Calu3 (cell line): ENCODE measurements at regions of chr10 and their contacts with region 1.

Region 1: DNA sequence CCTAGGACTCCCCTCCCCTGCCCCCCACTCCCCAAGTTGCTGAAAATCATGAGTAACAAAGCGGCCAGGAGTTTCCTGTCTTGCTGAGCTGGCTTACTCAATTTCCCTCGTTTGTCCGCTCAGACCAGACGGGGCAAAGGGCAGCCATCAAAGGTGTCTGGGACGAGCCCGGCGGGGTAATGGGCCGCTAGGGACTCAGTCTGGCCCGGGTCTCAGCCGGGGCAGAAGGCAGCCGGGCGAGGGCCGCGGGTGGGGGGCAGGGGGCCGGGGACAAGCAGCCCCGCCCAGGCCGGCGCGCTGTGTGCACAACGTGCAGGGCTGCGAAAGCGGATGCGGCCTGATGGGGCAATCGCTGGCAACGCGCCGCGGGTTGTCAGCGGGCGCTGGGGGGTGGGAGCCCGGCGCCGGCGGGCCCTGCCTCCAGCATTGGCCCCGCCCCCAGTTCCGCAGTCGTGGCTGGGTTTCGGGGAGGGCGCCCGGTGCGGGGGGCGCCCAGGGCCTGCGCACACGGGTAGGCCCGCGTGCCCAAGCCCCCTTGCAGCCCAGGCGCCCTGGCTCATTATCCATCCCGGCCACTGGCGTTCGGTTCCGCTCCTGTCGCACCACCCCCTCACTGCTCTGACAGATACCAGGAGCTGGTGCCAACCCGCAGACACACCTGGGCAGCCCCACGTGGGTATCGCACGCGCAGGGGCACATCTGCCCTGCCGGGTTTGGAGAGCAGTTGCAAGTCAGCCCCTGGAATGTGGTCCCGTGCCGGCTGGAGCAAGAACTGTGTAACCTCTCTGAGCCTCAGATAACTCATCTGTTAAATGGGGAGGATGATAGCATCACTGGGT is 35.1 kb downstream of the DNAJB12 start:
- DNase-seq: peak; percentile 97
- H3K4me3 Mint-ChIP-seq: peak overlapping the region; percentile 46
- H3K27ac Mint-ChIP-seq: peak overlapping the region; percentile 98
- H3K4me1 Mint-ChIP-seq: peaks cover 89% of the 10 kb centered on the region
- H3K27me3 Mint-ChIP-seq: no peaks in the 10 kb centered on the region
- CTCF ChIP-seq: no peak

Region 2: GRCh38 chr10:72260588-72261322 is 58.9 kb before region 1 on chr10:
- CTCF ChIA-PET with region 1: interaction called, 23 read pairs
- intact Hi-C with region 1: no loop called
- DNase-seq: peak; percentile 100
- H3K4me3 Mint-ChIP-seq: peak overlapping the region; percentile 67
- H3K27ac Mint-ChIP-seq: peak overlapping the region; percentile 98
- H3K4me1 Mint-ChIP-seq: peaks cover 59% of the 10 kb centered on the region
- H3K27me3 Mint-ChIP-seq: no peaks in the 10 kb centered on the region
- CTCF ChIP-seq: no peak

Region 3: DNA sequence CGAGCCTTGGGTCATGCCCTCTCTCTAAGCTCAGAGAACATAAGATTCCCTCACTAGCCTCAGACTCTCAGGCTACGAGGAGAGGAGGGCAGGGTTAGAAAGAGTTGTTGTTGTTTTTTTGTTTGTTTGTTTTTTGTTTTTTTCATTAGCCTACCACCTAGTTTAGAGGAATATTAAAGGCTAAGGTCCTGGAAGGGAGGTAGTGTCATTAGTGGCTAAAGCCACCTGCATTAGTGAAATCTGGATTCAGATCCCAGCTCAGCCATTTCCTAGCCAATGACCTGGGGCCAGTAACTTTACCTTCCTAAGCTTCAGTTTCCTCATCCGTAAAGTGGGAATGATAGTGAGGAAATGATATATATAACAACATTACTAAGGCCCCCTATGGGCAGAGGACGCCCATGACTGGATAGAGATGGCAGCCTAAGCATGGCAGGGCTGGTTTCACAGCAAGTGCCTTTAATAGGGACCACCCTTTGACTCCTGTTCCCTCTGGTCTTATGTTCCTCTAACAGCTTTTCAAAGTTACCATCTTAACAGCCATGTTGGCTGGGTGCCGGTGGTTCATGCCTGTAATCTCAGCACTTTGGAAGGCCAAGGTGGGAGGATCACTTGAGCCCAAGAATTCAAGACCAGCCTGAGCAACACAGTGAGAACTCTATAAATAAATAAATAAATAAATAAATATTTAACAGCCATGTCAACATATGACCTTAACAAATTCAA is 40.8 kb before region 1 on chr10:
- CTCF ChIA-PET with region 1: interaction called, 29 read pairs
- intact Hi-C with region 1: no loop called
- DNase-seq: no peak
- H3K4me3 Mint-ChIP-seq: no peak overlapping the region
- H3K27ac Mint-ChIP-seq: peak overlapping the region; percentile 99
- H3K4me1 Mint-ChIP-seq: peaks cover 38% of the 10 kb centered on the region
- H3K27me3 Mint-ChIP-seq: no peaks in the 10 kb centered on the region
- CTCF ChIP-seq: no peak

Region 4: GRCh38 chr10:72292223-72292691 is 27.4 kb before region 1 on chr10:
- CTCF ChIA-PET with region 1: interaction called, 13 read pairs
- intact Hi-C with region 1: loop called (anchors 2 kb)
- DNase-seq: peak; percentile 90
- H3K4me3 Mint-ChIP-seq: peak overlapping the region; percentile 1
- H3K27ac Mint-ChIP-seq: peak overlapping the region; percentile 74
- H3K4me1 Mint-ChIP-seq: peaks cover 42% of the 10 kb centered on the region
- H3K27me3 Mint-ChIP-seq: no peaks in the 10 kb centered on the region
- CTCF ChIP-seq: no peak

Region 5: GRCh38 chr10:72297968-72298773 is 21.5 kb before region 1 on chr10:
- CTCF ChIA-PET with region 1: interaction called, 13 read pairs
- intact Hi-C with region 1: loop called (anchors 2 kb)
- DNase-seq: peak; percentile 99
- H3K4me3 Mint-ChIP-seq: peak overlapping the region; percentile 74
- H3K27ac Mint-ChIP-seq: peak overlapping the region; percentile 98
- H3K4me1 Mint-ChIP-seq: peaks cover 47% of the 10 kb centered on the region
- H3K27me3 Mint-ChIP-seq: no peaks in the 10 kb centered on the region
- CTCF ChIP-seq: no peak

Region 6: DNA sequence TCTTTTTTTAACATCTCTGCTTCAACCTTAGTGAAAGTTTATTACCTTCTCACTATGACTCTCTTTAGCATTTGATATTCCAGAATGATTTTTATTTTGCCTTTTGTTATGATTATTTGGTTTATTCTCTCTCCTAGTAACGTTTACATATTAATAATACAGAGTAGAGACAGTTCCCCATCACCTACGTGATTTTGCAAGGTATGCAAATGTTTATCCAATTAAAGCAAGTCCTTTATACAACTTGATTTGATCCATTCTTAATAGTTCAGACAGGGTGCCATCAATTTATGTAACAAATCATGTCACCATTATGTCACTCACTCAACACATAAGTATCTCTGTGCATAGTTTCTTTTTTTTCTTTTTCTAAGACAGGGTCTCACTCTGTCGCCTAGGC is 822.0 kb after region 1 on chr10:
- CTCF ChIA-PET with region 1: no interaction called
- intact Hi-C with region 1: no loop called
- DNase-seq: no peak
- H3K4me3 Mint-ChIP-seq: no peak overlapping the region
- H3K27ac Mint-ChIP-seq: no peak overlapping the region
- H3K4me1 Mint-ChIP-seq: no peaks in the 10 kb centered on the region
- H3K27me3 Mint-ChIP-seq: no peaks in the 10 kb centered on the region
- CTCF ChIP-seq: no peak